ENCODE measurements at regions of chr12 and their contacts with region 1.

Region 1: DNA sequence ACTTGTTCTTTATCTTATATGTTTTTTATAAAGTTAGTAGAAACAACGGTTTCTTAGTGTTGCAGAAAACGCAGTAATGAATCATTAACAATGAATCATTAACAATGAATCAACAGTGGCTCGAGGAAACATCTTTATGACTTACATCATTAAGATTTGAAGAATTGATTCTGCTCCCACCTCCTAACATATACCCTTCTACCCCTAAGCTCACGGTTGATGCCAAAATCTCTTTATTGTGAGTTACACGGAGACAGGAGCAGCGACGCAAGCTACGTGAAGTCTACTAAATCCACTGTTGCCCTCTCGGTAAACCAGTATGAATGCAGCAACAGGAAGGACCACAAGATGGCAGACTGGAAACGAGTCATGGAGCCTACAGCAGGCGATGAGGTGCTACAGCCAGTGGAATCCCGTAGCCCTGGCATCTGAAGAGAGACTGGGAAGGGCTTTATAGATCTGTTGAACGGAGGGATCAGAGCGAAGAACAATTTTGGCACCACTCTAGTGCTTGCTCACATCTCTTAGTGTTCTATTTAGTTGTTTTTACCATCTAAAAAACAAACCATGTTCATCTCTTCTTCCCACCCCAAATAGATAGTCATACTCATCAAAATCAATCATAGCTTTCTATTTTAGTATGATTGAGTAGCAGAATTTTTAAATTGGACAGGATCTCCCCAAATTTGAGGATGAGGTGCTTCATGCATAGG is 332.7 kb downstream of the DUSP6 start:
- DNase-seq: peak; percentile 26 to 76 (median 36)
- ATAC-seq: peak; percentile 97
- H3K4me3 ChIP-seq: no peak overlapping the region
- H3K27ac ChIP-seq: no peak overlapping the region
- H3K4me1 ChIP-seq: no peaks in the 10 kb centered on the region
- H3K27me3 ChIP-seq: no peaks in the 10 kb centered on the region
- CTCF ChIP-seq: peak; percentile 69 to 83 (median 82)
- EP300 ChIP-seq: no peak
- POLR2A ChIP-seq: no peak
- RAD21 ChIP-seq: peak; percentile 97

Region 2: DNA sequence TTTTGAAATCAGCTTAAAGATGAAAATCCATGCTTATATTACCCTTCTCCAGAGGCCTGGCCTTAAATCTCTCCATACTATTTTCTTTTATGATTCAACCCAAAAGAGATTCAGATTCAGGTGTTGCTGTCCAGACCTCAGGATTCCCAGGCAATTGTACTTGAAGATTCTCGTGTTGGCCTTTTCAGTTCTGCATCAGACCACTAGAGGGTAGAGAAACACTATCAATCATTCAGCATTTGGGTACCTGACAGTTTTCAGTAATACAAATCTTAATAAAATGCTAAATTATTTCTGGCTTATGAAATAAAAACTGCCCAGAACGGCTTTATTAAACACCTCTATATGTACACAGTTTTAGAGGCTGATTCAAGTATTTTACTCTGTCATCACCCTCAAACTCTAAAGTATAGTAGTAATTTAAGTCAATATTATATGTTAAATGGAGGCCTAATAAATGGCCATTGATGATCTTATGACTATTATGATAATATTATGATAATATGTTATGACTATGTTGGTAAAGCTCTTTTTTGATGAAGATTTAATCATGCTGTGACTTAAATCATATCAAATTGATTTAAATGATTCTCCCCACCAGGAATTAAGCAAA is 31.6 kb after region 1 on chr12:
- CTCF ChIA-PET with region 1: no interaction called
- POLR2A ChIA-PET with region 1: no interaction called
- in situ Hi-C with region 1: no loop called
- intact Hi-C with region 1: loop called (anchors 2 kb)
- DNase-seq: peak; percentile 30 to 53 (median 50)
- ATAC-seq: peak; percentile 49; the same call in 1 of the 3 replicates
- H3K4me3 ChIP-seq: no peak overlapping the region
- H3K27ac ChIP-seq: no peak overlapping the region
- H3K4me1 ChIP-seq: no peaks in the 10 kb centered on the region
- H3K27me3 ChIP-seq: no peaks in the 10 kb centered on the region
- CTCF ChIP-seq: peak; percentile 37 to 58 (median 53); a peak in 5 of 6 replicates
- EP300 ChIP-seq: no peak
- POLR2A ChIP-seq: no peak
- RAD21 ChIP-seq: peak; percentile 95 to 96

Region 3: DNA sequence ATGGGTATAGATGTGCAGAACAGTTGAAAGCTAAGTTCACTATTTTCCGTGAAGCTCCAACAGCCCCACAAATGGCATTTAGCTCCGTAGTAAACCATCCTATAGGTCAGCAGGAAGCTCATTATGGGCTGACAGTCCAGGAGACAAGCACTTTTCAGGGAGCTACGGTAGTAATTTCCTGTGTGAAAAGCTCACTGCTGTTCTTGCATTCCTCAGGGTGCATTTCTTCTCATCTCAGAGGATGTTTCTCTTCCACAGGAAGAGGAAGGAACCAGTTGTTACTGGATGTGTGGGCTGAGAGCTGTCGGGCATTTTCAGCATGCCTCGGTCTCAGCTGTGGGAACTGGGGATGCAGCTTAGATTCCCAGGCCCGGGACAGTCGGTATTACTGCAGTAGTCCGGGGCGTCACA is 432.3 kb after region 1 on chr12:
- CTCF ChIA-PET with region 1: no interaction called
- POLR2A ChIA-PET with region 1: no interaction called
- in situ Hi-C with region 1: loop called (anchors 5 kb)
- intact Hi-C with region 1: no loop called
- DNase-seq: no peak
- ATAC-seq: peak; percentile 23; the same call in 1 of the 3 replicates
- H3K4me3 ChIP-seq: no peak overlapping the region
- H3K27ac ChIP-seq: no peak overlapping the region
- H3K4me1 ChIP-seq: peaks cover 0 to 4% of the 10 kb centered on the region in 2 experiments; a peak in 2 of 5 replicates
- H3K27me3 ChIP-seq: no peaks in the 10 kb centered on the region
- CTCF ChIP-seq: no peak
- EP300 ChIP-seq: no peak
- POLR2A ChIP-seq: no peak
- RAD21 ChIP-seq: no peak

Region 4: GRCh38 chr12:89461649-89462612 is 442.4 kb after region 1 on chr12:
- CTCF ChIA-PET with region 1: interaction called, 48 read pairs
- POLR2A ChIA-PET with region 1: no interaction called
- in situ Hi-C with region 1: loop called (anchors 5 kb)
- intact Hi-C with region 1: loop called (anchors 1 kb)
- DNase-seq: peak; percentile 14 to 47 (median 27)
- ATAC-seq: peak; percentile 94
- H3K4me3 ChIP-seq: no peak overlapping the region
- H3K27ac ChIP-seq: no peak overlapping the region
- H3K4me1 ChIP-seq: no peaks in the 10 kb centered on the region
- H3K27me3 ChIP-seq: no peaks in the 10 kb centered on the region
- CTCF ChIP-seq: peak; percentile 41 to 73 (median 49); a peak in 4 of 6 replicates
- EP300 ChIP-seq: no peak
- POLR2A ChIP-seq: no peak
- RAD21 ChIP-seq: peak; percentile 95 to 97

Region 5: GRCh38 chr12:89529738-89530137 is 510.2 kb after region 1 on chr12:
- CTCF ChIA-PET with region 1: interaction called, 19 read pairs
- POLR2A ChIA-PET with region 1: no interaction called
- in situ Hi-C with region 1: loop called (anchors 10 kb)
- intact Hi-C with region 1: loop called (anchors 1 kb)
- DNase-seq: peak; percentile 39 to 60 (median 46)
- ATAC-seq: peak; percentile 26; the same call in 2 of the 3 replicates
- H3K4me3 ChIP-seq: no peak overlapping the region
- H3K27ac ChIP-seq: no peak overlapping the region
- H3K4me1 ChIP-seq: peaks cover 0 to 15% of the 10 kb centered on the region in 2 experiments; a peak in 3 of 5 replicates
- H3K27me3 ChIP-seq: no peaks in the 10 kb centered on the region
- CTCF ChIP-seq: peak; percentile 64 to 82 (median 66); a peak in 5 of 6 replicates
- EP300 ChIP-seq: no peak
- POLR2A ChIP-seq: no peak
- RAD21 ChIP-seq: peak; percentile 92 to 94

Region 6: DNA sequence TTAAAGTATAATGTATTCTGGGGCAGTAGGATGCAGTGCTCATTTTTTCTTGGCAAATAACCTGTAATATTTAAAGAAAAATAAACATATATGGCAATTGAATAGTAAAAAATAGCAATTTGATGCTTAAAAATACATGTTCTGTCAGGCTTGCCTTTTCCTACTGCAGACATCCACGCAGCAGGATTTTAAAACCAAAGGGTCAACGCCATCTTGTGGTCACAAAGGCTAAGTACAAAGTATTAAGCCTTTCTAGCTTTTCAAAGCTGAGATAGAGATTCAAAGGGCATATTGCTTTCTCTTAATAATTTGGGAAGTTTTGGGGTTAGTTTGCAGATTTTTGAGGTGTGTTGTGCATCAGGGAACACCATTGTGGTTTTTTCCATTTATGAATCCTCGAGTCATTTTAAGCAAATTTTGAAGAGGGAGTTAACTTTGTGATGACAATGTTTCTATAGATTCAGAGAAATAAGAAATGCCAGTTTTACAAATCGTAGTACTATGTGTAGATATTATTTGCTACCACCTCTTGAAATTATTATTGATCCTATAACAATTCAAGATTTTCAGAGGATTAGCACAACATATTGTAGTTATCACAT is 1940.1 kb after region 1 on chr12:
- CTCF ChIA-PET with region 1: no interaction called
- POLR2A ChIA-PET with region 1: no interaction called
- in situ Hi-C with region 1: loop called (anchors 25 kb)
- intact Hi-C with region 1: no loop called
- DNase-seq: peak; percentile 13 to 50 (median 28)
- ATAC-seq: peak; percentile 82
- H3K4me3 ChIP-seq: no peak overlapping the region
- H3K27ac ChIP-seq: no peak overlapping the region
- H3K4me1 ChIP-seq: peaks cover 0 to 3% of the 10 kb centered on the region in 2 experiments; a peak in 1 of 5 replicates
- H3K27me3 ChIP-seq: no peaks in the 10 kb centered on the region
- CTCF ChIP-seq: peak; percentile 62 to 67 (median 66)
- EP300 ChIP-seq: no peak
- POLR2A ChIP-seq: no peak
- RAD21 ChIP-seq: peak; percentile 43 to 66; a peak in 3 of 4 replicates